Activated naive CD4-positive, alpha-beta T cell treated with anti-CD3 and anti-CD28 coated beads, Interleukin-2, amount 10 ng/mL, durations not matched to agents 7 days and 5 days (primary cell): ENCODE measurements at regions of chr14 and their contacts with region 1.

Region 1: GRCh38 chr14:89973234-89973823 is 17.6 kb downstream of the TDP1 start:
- DNase-seq: peak; percentile 71
- H3K4me3 Mint-ChIP-seq: no peak overlapping the region
- H3K27ac Mint-ChIP-seq: no peak overlapping the region
- H3K4me1 Mint-ChIP-seq: no peaks in the 10 kb centered on the region
- H3K27me3 Mint-ChIP-seq: no peaks in the 10 kb centered on the region

Region 2: DNA sequence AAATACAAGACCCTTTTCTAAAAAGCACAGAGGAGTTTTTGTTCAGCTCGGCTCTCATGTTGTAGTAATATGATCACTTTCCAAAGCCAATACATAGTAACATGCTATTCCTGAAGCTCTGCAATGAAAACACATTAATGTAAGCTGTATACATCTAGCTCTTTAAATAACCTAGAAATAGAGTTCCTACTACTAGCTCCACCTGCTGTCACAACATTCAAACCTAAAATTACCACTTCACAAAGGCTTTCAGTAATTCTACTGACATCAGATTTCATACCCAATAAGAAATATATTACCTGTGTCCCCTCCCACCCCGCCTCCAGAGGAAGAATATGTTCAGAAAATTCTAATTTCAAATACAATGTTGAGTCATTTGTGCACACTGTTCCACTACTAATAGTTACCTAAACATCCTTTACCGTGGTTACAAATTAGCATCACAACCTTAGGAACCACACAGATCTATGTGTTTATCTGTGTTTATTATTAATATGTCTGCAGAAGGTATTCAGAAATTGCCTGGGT is 36.6 kb before region 1 on chr14:
- CTCF ChIA-PET with region 1: interaction called, 22 read pairs
- DNase-seq: no peak
- H3K4me3 Mint-ChIP-seq: no peak overlapping the region
- H3K27ac Mint-ChIP-seq: no peak overlapping the region
- H3K4me1 Mint-ChIP-seq: no peaks in the 10 kb centered on the region
- H3K27me3 Mint-ChIP-seq: peaks cover 3% of the 10 kb centered on the region

Region 3: GRCh38 chr14:89955745-89956660 is 17.3 kb before region 1 on chr14 and contains the start of gene TDP1:
- CTCF ChIA-PET with region 1: interaction called, 18 read pairs
- DNase-seq: peak; percentile 98
- H3K4me3 Mint-ChIP-seq: peak within 1 kb of the TSS; percentile 97
- H3K27ac Mint-ChIP-seq: peak within 1 kb of the TSS; percentile 99
- H3K4me1 Mint-ChIP-seq: peaks cover 66% of the 10 kb centered on the region
- H3K27me3 Mint-ChIP-seq: peaks cover 3% of the 10 kb centered on the region

Region 4: GRCh38 chr14:89983375-89983774 is 10.0 kb after region 1 on chr14:
- CTCF ChIA-PET with region 1: interaction called, 24 read pairs
- DNase-seq: no peak
- H3K4me3 Mint-ChIP-seq: no peak overlapping the region
- H3K27ac Mint-ChIP-seq: no peak overlapping the region
- H3K4me1 Mint-ChIP-seq: no peaks in the 10 kb centered on the region
- H3K27me3 Mint-ChIP-seq: no peaks in the 10 kb centered on the region

Region 5: GRCh38 chr14:90005939-90006530 is 32.7 kb after region 1 on chr14:
- CTCF ChIA-PET with region 1: interaction called, 15 read pairs
- DNase-seq: no peak
- H3K4me3 Mint-ChIP-seq: no peak overlapping the region
- H3K27ac Mint-ChIP-seq: no peak overlapping the region
- H3K4me1 Mint-ChIP-seq: no peaks in the 10 kb centered on the region
- H3K27me3 Mint-ChIP-seq: no peaks in the 10 kb centered on the region

Region 6: GRCh38 chr14:90235179-90235976 is 262.0 kb after region 1 on chr14:
- CTCF ChIA-PET with region 1: interaction called, 24 read pairs
- DNase-seq: peak; percentile 78
- H3K4me3 Mint-ChIP-seq: no peak overlapping the region
- H3K27ac Mint-ChIP-seq: no peak overlapping the region
- H3K4me1 Mint-ChIP-seq: peaks cover 3% of the 10 kb centered on the region
- H3K27me3 Mint-ChIP-seq: peaks cover 24% of the 10 kb centered on the region